CD4-positive, alpha-beta T cell (primary cell): ENCODE measurements at regions of chrX and their contacts with region 1.

Region 1: GRCh38 chrX:48574270-48575266 is at the start of gene RBM3:
- DNase-seq: peak; percentile 80 to 97 (median 90)
- ATAC-seq: peak; percentile 93
- H3K4me3 ChIP-seq: peak within 1 kb of the TSS; percentile 87
- H3K4me3 Mint-ChIP-seq: peak within 1 kb of the TSS; percentile 98
- H3K27ac ChIP-seq: peak within 1 kb of the TSS; percentile 99 to 100
- H3K27ac Mint-ChIP-seq: peak within 1 kb of the TSS; percentile 98
- H3K4me1 ChIP-seq: peaks cover 26% of the 10 kb centered on the region
- H3K4me1 Mint-ChIP-seq: peaks cover 27% of the 10 kb centered on the region
- H3K27me3 ChIP-seq: no peaks in the 10 kb centered on the region
- H3K27me3 Mint-ChIP-seq: no peaks in the 10 kb centered on the region
- CTCF ChIP-seq: peak; percentile 36
- total RNA-seq, gene RBM3: 351 to 377 TPM

Region 2: DNA sequence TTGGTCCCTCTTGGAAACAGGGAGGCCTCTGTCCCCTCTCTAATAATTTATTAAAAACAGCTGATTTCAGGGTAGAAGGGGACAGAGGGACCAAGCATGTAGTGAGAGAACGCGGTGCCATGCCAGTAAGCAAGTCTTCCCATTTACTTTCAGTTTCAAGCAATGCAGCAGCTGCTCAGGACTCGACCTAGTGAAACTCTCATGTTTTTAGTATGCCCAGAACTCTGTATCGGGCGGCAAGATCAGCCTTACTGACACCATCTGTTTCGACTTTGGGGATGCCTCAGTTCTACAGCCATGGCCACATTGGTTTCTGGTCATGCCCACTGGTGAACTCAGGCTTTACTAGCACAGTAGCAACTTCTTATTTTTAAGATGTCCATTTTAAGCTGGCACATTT is 697.2 kb before region 1 on chrX:
- CTCF ChIA-PET with region 1: no interaction called
- POLR2A ChIA-PET with region 1: no interaction called
- intact Hi-C with region 1: no loop called
- DNase-seq: no peak
- ATAC-seq: no peak
- H3K4me3 ChIP-seq: no peak overlapping the region
- H3K4me3 Mint-ChIP-seq: no peak overlapping the region
- H3K27ac ChIP-seq: no peak overlapping the region
- H3K27ac Mint-ChIP-seq: no peak overlapping the region
- H3K4me1 ChIP-seq: no peaks in the 10 kb centered on the region
- H3K4me1 Mint-ChIP-seq: no peaks in the 10 kb centered on the region
- H3K27me3 ChIP-seq: no peaks in the 10 kb centered on the region
- H3K27me3 Mint-ChIP-seq: no peaks in the 10 kb centered on the region
- CTCF ChIP-seq: no peak

Region 3: GRCh38 chrX:48475774-48476577 is 98.6 kb before region 1 on chrX and contains the start of gene FTSJ1:
- CTCF ChIA-PET with region 1: no interaction called
- POLR2A ChIA-PET with region 1: interaction called, 13 read pairs
- intact Hi-C with region 1: loop called in 1 of 2 experiments (anchors 10 kb)
- DNase-seq: peak; percentile 77 to 97 (median 84)
- ATAC-seq: peak; percentile 90
- H3K4me3 ChIP-seq: peak within 1 kb of the TSS; percentile 92
- H3K4me3 Mint-ChIP-seq: peak within 1 kb of the TSS; percentile 90
- H3K27ac ChIP-seq: peak within 1 kb of the TSS; percentile 73 to 79
- H3K27ac Mint-ChIP-seq: peak within 1 kb of the TSS; percentile 74
- H3K4me1 ChIP-seq: peaks cover 22% of the 10 kb centered on the region
- H3K4me1 Mint-ChIP-seq: peaks cover 27% of the 10 kb centered on the region
- H3K27me3 ChIP-seq: no peaks in the 10 kb centered on the region
- H3K27me3 Mint-ChIP-seq: no peaks in the 10 kb centered on the region
- CTCF ChIP-seq: no peak
- total RNA-seq, gene FTSJ1: 60.0 to 61.0 TPM

Region 4: DNA sequence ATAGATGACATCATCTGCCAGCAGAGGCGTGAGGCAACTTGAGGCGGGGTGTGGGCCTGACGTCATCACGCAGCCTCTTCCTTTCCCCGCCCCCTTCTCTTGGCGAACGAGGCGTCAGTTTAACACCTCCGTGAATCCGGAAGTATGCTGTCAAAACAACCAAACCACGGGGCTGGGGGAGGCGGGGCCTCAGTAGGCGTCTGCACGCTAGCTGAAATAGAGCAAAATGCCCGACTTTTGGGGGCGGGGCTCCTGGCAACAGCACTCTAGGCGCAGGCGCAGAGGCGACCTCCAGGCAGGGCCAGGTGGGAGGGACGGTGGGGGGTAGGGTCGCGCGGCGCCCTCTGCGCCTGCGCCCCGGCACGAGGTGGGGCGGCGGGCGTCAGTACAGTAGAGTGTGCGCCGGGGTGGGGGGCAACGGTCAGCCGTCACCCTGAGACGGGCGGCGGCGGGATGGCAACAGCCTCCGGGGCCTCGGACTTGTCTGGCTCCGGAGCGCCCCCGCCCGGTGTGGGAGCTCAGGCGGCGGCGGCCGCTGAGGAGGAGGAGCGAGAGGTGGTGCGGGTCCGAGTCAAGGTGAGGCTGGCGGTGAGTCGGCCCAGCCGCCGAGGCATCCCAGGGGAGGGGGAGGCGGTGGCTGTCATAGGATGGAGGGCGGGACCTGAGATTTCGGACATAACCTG is 35.1 kb before region 1 on chrX and contains the start of gene TBC1D25:
- CTCF ChIA-PET with region 1: interaction called, 4 read pairs
- POLR2A ChIA-PET with region 1: interaction called, 101 read pairs
- intact Hi-C with region 1: loop called (anchors 1 to 2 kb)
- DNase-seq: peak; percentile 89 to 99 (median 96)
- ATAC-seq: peak; percentile 87
- H3K4me3 ChIP-seq: peak within 1 kb of the TSS; percentile 74
- H3K4me3 Mint-ChIP-seq: peak within 1 kb of the TSS; percentile 93
- H3K27ac ChIP-seq: peak within 1 kb of the TSS; percentile 84 to 95
- H3K27ac Mint-ChIP-seq: peak within 1 kb of the TSS; percentile 97
- H3K4me1 ChIP-seq: peaks cover 21% of the 10 kb centered on the region
- H3K4me1 Mint-ChIP-seq: peaks cover 20% of the 10 kb centered on the region
- H3K27me3 ChIP-seq: no peaks in the 10 kb centered on the region
- H3K27me3 Mint-ChIP-seq: no peaks in the 10 kb centered on the region
- CTCF ChIP-seq: peak; percentile 30
- total RNA-seq, gene TBC1D25: 26.7 to 30.5 TPM

Region 5: DNA sequence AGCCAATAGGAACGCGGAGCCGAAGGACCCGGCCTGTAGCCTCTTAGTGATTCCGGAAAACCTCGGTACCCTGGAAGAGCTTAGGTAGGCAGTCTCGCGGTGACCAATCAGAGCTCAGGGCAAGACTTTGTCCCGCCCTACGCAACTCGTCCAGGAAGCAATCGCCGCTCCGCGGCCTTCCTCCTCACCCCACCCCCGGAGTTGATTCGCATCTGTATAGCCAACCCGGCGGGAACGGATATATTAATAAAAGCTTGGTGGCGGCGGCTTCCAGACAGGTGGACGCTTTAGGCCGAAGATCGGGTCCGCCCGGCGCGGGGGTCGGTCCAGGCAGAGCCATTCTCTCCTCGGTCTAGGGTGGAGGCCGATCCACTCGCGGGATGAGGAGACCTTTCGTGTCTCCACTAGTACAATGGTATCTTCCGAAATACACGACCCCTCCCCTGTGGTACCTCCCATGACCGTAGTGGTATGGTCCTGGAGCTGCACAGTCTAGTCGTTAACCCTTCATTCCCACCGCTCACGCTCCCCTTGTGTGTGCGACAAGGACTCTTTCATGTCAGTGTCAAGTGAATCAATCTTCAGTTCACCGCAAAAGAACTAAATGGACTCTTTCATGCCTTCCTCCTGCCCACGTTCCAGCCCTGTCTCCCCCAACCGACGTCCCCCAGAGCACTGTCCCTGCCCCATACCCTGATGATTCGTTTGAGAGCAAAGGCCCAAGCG is 162.8 kb after region 1 on chrX:
- CTCF ChIA-PET with region 1: no interaction called
- POLR2A ChIA-PET with region 1: interaction called, 14 read pairs
- intact Hi-C with region 1: no loop called
- DNase-seq: peak; percentile 72 to 97 (median 84)
- ATAC-seq: peak; percentile 94
- H3K4me3 ChIP-seq: peak overlapping the region; percentile 74
- H3K4me3 Mint-ChIP-seq: peak overlapping the region; percentile 92
- H3K27ac ChIP-seq: peak overlapping the region; percentile 76 to 92
- H3K27ac Mint-ChIP-seq: peak overlapping the region; percentile 96
- H3K4me1 ChIP-seq: peaks cover 17% of the 10 kb centered on the region
- H3K4me1 Mint-ChIP-seq: peaks cover 24% of the 10 kb centered on the region
- H3K27me3 ChIP-seq: no peaks in the 10 kb centered on the region
- H3K27me3 Mint-ChIP-seq: no peaks in the 10 kb centered on the region
- CTCF ChIP-seq: no peak

Region 6: GRCh38 chrX:48937054-48937907 is 362.7 kb after region 1 on chrX:
- CTCF ChIA-PET with region 1: no interaction called
- POLR2A ChIA-PET with region 1: interaction called, 11 read pairs
- intact Hi-C with region 1: no loop called
- DNase-seq: peak; percentile 77 to 94 (median 88)
- ATAC-seq: peak; percentile 68
- H3K4me3 ChIP-seq: peak overlapping the region; percentile 49
- H3K4me3 Mint-ChIP-seq: peak overlapping the region; percentile 82
- H3K27ac ChIP-seq: peak overlapping the region; percentile 92 to 93
- H3K27ac Mint-ChIP-seq: peak overlapping the region; percentile 98
- H3K4me1 ChIP-seq: peaks cover 85% of the 10 kb centered on the region
- H3K4me1 Mint-ChIP-seq: peaks cover 90% of the 10 kb centered on the region
- H3K27me3 ChIP-seq: no peaks in the 10 kb centered on the region
- H3K27me3 Mint-ChIP-seq: no peaks in the 10 kb centered on the region
- CTCF ChIP-seq: peak; percentile 40

Region 7: DNA sequence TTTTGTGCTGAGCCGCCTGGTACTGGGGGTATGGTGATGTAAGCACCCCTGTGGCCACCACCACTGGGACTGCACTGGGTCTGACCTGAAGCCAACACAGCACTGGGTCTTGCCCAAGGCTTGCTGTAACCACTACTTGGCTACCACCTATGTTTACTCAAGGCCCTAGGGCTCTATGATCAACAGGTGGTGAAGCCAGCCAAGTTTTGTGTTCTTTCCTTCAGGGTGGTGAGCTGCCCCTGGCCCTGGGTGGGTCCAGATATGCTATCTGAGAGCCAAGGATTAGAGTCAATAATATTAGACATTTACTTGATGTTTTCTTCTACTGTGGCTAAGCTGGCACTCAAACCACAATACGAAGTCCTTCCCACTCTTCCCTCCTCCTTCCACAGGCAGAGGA is 1199.4 kb after region 1 on chrX:
- CTCF ChIA-PET with region 1: no interaction called
- POLR2A ChIA-PET with region 1: no interaction called
- intact Hi-C with region 1: no loop called
- DNase-seq: no peak
- ATAC-seq: no peak
- H3K4me3 ChIP-seq: no peak overlapping the region
- H3K4me3 Mint-ChIP-seq: no peak overlapping the region
- H3K27ac ChIP-seq: no peak overlapping the region
- H3K27ac Mint-ChIP-seq: no peak overlapping the region
- H3K4me1 ChIP-seq: no peaks in the 10 kb centered on the region
- H3K4me1 Mint-ChIP-seq: no peaks in the 10 kb centered on the region
- H3K27me3 ChIP-seq: peaks cover 3 to 5% of the 10 kb centered on the region in 2 experiments
- H3K27me3 Mint-ChIP-seq: peaks cover 42% of the 10 kb centered on the region
- CTCF ChIP-seq: no peak